BJ (cell line): ENCODE measurements at regions of chr6 and their contacts with region 1.

Region 1: DNA sequence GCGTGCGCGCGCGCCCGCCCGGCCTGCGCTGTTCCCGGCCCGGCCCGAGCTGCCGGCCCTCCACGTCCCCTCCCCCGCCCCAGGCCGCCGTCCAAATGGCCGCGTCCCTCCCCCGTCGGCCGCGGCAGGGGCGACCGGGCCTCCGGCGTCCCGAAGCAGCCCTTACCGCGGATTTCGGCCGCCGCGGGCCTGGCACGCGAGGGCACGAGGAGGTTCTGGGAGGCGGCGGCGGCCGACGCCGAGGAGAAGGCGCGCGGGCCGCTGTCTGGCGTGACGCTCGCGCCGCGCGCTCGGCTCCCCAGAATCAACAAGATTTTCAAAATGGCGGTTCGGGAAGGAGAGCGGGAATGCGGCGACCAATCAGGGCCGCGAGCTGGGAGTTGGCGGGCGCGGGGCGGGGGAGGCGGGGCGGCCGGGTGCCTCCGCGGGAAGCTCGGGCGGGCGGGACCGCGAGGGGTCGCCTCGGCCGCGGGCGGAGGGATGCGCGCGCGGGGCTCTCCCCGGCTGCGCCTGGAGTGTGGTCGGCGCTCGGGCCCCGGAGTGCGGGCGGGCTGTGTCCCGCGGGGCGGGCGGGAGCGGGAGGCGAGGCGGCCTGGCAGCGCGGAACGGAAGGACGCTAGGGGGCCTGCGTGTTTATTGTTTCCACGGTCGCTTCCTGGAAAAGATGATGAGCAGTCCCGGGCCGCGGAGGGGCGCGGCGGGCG is at the start of gene DEK:
- DNase-seq: no peak
- H3K4me3 ChIP-seq: peak within 1 kb of the TSS; percentile 96
- H3K27me3 ChIP-seq: no peaks in the 10 kb centered on the region
- CTCF ChIP-seq: peak; percentile 62
- polyA plus RNA-seq, gene DEK: 29.2 and 52.1 TPM in 2 replicates

Region 2: GRCh38 chr6:17987576-17988421 is 276.6 kb before region 1 on chr6 and contains the start of gene KIF13A:
- CTCF ChIA-PET with region 1: no interaction called
- POLR2A ChIA-PET with region 1: no interaction called
- DNase-seq: no peak
- H3K4me3 ChIP-seq: peak within 1 kb of the TSS; percentile 50
- H3K27me3 ChIP-seq: no peaks in the 10 kb centered on the region
- CTCF ChIP-seq: no peak
- polyA plus RNA-seq, gene KIF13A: 41.4 and 47.9 TPM in 2 replicates

Region 3: GRCh38 chr6:18302561-18303439 is 38.4 kb after region 1 on chr6:
- CTCF ChIA-PET with region 1: no interaction called
- POLR2A ChIA-PET with region 1: interaction called, 29 read pairs
- DNase-seq: no peak
- H3K4me3 ChIP-seq: no peak overlapping the region
- H3K27me3 ChIP-seq: no peaks in the 10 kb centered on the region
- CTCF ChIP-seq: no peak

Region 4: GRCh38 chr6:18362058-18362561 is 97.7 kb after region 1 on chr6:
- CTCF ChIA-PET with region 1: no interaction called
- POLR2A ChIA-PET with region 1: no interaction called
- DNase-seq: peak; percentile 88
- H3K4me3 ChIP-seq: no peak overlapping the region
- H3K27me3 ChIP-seq: no peaks in the 10 kb centered on the region
- CTCF ChIP-seq: no peak